CD4-positive, alpha-beta memory T cell (primary cell): ENCODE measurements at regions of chr9 and their contacts with region 1.

Region 1: DNA sequence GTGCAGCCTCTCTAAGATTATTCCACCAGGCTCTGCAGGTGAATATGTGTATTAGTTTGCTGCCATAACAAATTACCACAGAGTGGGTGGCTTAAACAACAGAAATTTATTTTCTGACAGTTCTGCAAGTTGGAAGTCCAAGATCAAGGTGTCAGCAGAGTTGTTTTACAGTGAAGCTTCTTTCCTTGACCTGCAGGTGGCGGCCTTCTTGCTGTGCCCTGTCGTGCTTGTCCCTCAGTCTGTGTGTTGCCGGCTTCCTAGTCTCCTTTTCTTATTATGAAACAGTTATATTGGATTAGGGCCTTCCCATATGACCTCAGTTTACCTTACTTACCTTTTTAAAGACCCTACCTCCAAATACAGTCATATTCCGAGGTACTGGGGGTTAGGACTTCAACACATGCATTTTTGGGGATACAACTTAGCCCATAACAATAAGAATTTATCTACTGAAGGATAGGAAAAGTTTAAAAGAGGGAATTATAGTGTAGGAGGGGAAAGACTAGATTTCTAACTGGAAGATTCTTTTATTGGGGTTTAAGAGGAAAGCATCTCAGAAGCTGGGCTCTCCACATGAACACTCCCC is 97.4 kb downstream of the OSTF1 start:
- DNase-seq: peak; percentile 28 to 38 (median 34)
- H3K4me3 ChIP-seq: no peak overlapping the region
- H3K4me3 Mint-ChIP-seq: no peak overlapping the region
- H3K27ac ChIP-seq: no peak overlapping the region
- H3K27ac Mint-ChIP-seq: peak overlapping the region in 3 of 7 donors; percentile 9 to 39 (median 36)
- H3K4me1 ChIP-seq: peaks cover 15% of the 10 kb centered on the region
- H3K4me1 Mint-ChIP-seq: peaks cover 14 to 23% (median 18%) of the 10 kb centered on the region in 4 donors
- H3K27me3 ChIP-seq: no peaks in the 10 kb centered on the region
- H3K27me3 Mint-ChIP-seq: no peaks in the 10 kb centered on the region

Region 2: DNA sequence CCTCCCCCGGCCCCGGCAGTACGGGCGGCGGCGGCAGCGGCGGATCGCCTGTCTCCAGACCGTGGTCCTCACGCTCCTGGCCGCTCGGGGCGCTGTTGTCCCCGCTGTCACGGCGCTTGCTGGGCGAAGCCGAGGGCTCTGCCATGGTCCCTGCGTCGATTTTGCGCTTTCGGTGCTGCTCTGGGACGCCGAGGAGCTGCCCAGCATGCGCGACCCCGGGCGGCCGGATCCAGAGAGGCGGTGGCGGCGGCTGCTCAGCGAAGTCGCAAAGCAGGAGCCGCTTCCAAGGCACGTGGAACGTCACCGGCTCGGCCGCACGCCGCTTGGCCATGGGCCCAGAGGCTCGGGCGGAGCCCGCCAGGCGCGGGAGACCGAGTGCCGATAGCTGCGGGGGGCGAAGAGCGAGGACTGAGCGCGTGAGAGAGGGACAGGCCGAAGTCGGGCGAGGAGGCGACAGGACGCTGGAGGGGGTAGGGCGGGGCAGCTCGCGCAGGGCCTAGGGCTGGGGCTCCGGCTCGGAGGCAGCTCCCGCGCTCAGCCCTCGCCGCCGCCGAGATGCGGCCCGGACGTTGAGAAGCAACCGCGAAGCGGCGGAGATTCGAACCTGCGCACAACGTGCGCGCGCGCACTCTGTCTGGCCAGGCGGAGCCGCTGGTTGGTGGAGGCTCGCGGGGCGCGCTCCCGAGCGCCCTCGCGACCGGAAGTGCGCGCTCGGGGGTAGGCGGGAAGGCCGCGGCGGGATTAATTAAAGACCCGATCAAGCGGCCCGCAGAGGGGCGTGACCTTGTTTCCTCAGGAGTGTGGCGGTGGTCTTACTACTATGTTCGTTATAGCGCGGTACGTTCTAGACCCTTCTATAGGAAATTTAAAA is 233.2 kb before region 1 on chr9 and contains the start of gene C9orf40:
- CTCF ChIA-PET with region 1: interaction called, 7 read pairs
- POLR2A ChIA-PET with region 1: no interaction called
- intact Hi-C with region 1: loop called (anchors 5 kb)
- DNase-seq: peak; percentile 88 to 90 (median 89)
- H3K4me3 ChIP-seq: peak within 1 kb of the TSS; percentile 66 to 96
- H3K4me3 Mint-ChIP-seq: peak within 1 kb of the TSS; percentile 96 to 100 (median 98)
- H3K27ac ChIP-seq: peak within 1 kb of the TSS; percentile 82
- H3K27ac Mint-ChIP-seq: peak within 1 kb of the TSS; percentile 93 to 98 (median 97)
- H3K4me1 ChIP-seq: peaks cover 23% of the 10 kb centered on the region
- H3K4me1 Mint-ChIP-seq: peaks cover 9 to 31% (median 23%) of the 10 kb centered on the region in 4 donors
- H3K27me3 ChIP-seq: no peaks in the 10 kb centered on the region
- H3K27me3 Mint-ChIP-seq: no peaks in the 10 kb centered on the region
- total RNA-seq, gene C9orf40: 7.1 to 7.4 TPM

Region 3: GRCh38 chr9:75101096-75101495 is 84.6 kb before region 1 on chr9:
- CTCF ChIA-PET with region 1: interaction called, 12 read pairs
- POLR2A ChIA-PET with region 1: no interaction called
- intact Hi-C with region 1: no loop called
- DNase-seq: no peak
- H3K4me3 ChIP-seq: no peak overlapping the region
- H3K4me3 Mint-ChIP-seq: peak overlapping the region in 6 of 8 donors; percentile 13 to 40 (median 36)
- H3K27ac ChIP-seq: peak overlapping the region; percentile 26
- H3K27ac Mint-ChIP-seq: peak overlapping the region; percentile 64 to 92 (median 76)
- H3K4me1 ChIP-seq: peaks cover 84% of the 10 kb centered on the region
- H3K4me1 Mint-ChIP-seq: peaks cover 57 to 85% (median 72%) of the 10 kb centered on the region in 4 donors
- H3K27me3 ChIP-seq: no peaks in the 10 kb centered on the region
- H3K27me3 Mint-ChIP-seq: no peaks in the 10 kb centered on the region

Region 4: DNA sequence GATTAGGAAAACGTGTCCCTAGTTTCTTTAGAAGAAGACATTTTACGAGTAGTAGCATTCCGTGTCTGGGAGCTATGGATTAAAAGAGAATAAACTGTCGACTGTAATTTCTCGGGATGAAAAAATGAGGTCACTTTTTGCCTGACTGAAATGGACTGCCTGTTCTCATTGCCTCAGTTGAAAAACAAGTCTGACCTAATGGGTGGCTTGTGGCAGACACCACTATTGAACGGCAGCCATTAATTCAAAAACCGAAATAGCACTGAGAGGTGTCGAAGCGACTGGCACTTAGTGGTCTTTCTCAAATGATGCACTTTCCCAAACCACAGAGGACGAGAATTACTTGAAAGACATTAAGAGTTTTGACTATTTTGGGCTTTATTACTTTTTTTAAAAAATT is 62.0 kb before region 1 on chr9:
- CTCF ChIA-PET with region 1: no interaction called
- POLR2A ChIA-PET with region 1: no interaction called
- intact Hi-C with region 1: no loop called
- DNase-seq: no peak
- H3K4me3 ChIP-seq: no peak overlapping the region
- H3K4me3 Mint-ChIP-seq: no peak overlapping the region
- H3K27ac ChIP-seq: no peak overlapping the region
- H3K27ac Mint-ChIP-seq: peak overlapping the region in 2 of 7 donors; percentile 2 to 16
- H3K4me1 ChIP-seq: peaks cover 62% of the 10 kb centered on the region
- H3K4me1 Mint-ChIP-seq: peaks cover 43 to 74% (median 60%) of the 10 kb centered on the region in 4 donors
- H3K27me3 ChIP-seq: no peaks in the 10 kb centered on the region
- H3K27me3 Mint-ChIP-seq: no peaks in the 10 kb centered on the region

Region 5: GRCh38 chr9:75148561-75148960 is 37.1 kb before region 1 on chr9:
- CTCF ChIA-PET with region 1: interaction called, 17 read pairs
- POLR2A ChIA-PET with region 1: interaction called, 6 read pairs
- intact Hi-C with region 1: loop called (anchors 5 kb)
- DNase-seq: no peak
- H3K4me3 ChIP-seq: peak overlapping the region in 1 of 2 donors; percentile 0
- H3K4me3 Mint-ChIP-seq: peak overlapping the region in 7 of 8 donors; percentile 30 to 88 (median 80)
- H3K27ac ChIP-seq: peak overlapping the region; percentile 37
- H3K27ac Mint-ChIP-seq: peak overlapping the region; percentile 74 to 92 (median 84)
- H3K4me1 ChIP-seq: peaks cover 86% of the 10 kb centered on the region
- H3K4me1 Mint-ChIP-seq: peaks cover 62 to 92% (median 74%) of the 10 kb centered on the region in 4 donors
- H3K27me3 ChIP-seq: no peaks in the 10 kb centered on the region
- H3K27me3 Mint-ChIP-seq: no peaks in the 10 kb centered on the region

Region 6: DNA sequence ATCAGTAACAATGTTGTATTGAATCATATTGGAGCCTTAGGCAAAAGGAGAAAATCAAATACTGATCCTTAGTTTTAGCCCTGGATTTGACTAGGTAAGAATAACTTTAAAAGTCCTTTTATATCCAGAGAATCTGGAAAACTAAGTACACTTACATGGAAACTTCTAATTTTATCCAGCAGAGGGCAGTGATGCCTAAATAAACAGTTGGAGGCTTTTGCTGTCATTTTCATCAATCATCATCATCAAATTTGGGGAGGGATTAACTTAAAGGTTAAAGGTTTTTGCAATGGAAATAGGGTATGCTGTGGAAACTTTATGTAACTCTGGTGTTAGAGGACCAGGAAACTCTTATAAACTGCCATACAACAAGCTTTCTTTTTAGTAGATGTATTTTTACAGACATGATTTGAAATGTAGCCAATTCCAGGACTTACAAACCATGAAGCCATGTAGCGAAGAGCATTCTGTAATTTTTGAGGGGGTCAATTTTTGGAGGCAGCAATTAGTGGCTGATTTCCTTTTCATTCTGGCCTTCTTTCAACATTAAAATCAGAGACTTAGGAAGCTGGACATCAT is 15.3 kb after region 1 on chr9:
- CTCF ChIA-PET with region 1: interaction called, 10 read pairs
- POLR2A ChIA-PET with region 1: no interaction called
- intact Hi-C with region 1: no loop called
- DNase-seq: peak in 4 of 5 donors; percentile 33 to 47 (median 41)
- H3K4me3 ChIP-seq: no peak overlapping the region
- H3K4me3 Mint-ChIP-seq: no peak overlapping the region
- H3K27ac ChIP-seq: no peak overlapping the region
- H3K27ac Mint-ChIP-seq: peak overlapping the region in 2 of 7 donors; percentile 18 to 27
- H3K4me1 ChIP-seq: no peaks in the 10 kb centered on the region
- H3K4me1 Mint-ChIP-seq: peaks cover 0 to 3% (median 2%) of the 10 kb centered on the region in 4 donors
- H3K27me3 ChIP-seq: no peaks in the 10 kb centered on the region
- H3K27me3 Mint-ChIP-seq: no peaks in the 10 kb centered on the region